Cardiac septum (tissue), 1 donor: ENCODE measurements at regions of chr1 and their contacts with region 1.

Region 1: DNA sequence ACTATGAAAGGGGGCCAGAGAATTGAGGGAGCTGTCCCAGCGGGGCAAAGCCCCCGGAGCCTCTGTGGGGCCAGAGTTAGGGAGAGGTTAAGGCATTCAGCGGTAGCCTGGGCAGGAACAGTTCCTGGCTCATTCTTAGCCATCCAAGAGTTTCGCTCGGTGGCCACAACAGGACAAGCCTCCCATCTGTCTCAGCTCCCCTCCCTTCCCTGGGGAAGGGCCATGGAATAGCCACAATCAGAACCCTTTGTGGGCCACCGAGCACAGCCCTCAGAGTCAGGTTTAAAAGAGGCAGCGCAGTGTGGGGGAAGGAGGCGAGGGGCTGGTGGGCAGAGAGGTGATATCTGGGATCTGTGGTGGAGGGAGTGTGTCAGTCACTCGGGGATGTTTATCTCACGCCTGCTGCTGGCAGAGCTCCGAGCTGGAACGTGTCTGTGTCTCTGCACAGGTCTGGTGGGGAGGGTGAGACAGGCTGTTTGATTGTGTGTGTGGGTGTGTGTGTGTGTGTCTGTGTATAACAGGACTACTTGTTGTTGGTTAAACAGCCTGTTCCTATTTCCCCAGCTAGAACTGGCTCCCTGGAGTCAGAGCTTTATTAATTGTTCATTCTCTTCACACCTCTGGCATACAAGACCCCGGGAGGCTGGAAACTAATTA is 49.6 kb upstream of the GOLT1A start:
- DNase-seq: no peak

Region 2: DNA sequence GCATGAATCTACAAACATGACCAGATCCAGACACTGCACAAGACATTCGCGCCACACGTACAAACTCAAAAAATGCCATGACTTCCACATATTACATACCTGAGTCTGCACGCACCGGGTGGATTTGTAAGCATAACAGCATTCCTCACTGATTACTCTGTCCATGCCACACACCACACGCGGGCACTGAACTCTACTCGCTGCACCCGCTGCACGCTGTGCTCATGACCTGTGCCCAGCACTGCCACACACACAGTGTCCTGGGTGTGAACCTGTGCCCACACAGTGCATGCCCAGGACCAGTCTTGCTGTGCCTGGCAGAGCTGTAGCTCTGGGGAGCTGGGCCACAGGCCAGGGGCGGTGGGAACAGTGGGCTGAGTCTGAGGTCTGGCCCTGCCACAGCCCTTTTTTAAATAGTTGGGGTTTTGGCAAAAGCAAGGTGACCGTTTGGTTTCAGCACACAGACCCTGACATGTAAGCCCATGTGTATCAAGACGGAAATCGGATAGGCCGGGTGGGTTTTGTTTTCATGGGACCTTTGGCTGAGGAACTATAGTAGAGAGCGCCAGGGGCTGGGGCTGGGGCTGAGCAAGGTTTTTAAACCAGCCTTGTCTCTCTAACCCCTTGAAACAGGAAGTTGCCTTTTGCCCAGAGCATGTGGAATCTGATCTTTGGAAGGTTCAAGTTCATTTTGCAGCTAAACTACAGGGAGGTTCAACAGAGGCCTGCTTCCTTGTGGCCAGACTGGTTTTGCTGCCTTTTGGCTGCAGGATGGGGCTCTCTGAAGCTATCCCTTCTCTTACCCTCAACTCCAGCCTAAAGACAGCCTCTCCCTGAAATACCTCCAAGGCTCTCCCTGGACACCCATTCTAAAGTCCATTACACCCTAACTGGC is 37.3 kb before region 1 on chr1:
- intact Hi-C with region 1: no loop called
- DNase-seq: peak; percentile 70

Region 3: GRCh38 chr1:204296431-204296988 is 33.1 kb after region 1 on chr1:
- intact Hi-C with region 1: loop called (anchors 5 kb)
- DNase-seq: no peak